ENCODE measurements at regions of chr1 and their contacts with region 1.

Region 1: DNA sequence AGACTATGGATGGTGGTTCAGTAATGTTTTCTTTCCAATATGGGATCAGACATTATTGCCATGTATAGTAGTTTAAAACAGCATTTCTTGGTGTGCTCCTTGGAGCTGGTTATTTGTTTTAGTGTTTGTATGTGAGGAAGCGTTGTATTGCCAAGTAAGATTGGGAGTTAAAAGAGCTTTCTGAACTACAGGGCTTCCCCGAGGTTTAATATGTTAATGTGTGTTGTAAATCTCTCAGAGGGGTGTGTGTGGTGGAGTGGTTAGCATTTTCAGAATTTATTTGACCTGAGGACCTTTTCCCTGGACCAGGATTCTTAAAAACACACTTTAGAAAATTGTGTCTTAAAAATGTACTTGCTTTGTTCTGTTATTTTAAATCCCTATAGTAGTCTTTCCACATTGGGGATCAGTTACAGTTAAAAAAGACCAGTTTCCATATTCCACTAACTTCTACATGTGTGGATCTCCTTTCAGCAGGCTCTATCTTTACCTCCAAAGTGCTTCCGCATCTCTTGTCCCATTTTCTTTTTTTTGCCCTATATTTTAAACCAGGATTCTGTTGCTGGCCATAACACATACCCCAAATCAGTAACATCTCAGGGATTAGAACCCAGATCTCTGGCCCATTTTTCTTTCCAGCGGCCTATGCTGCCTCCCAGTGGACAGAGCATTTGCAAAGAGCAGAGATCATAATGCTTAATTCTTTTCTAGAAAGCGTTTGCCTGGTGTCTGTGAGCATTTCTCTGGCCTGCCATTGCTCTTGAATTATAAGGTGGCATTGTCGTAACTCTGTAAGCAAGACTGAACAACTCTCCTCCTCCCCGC is 58.6 kb downstream of the PBX1 start:
- DNase-seq: no peak
- H3K4me3 ChIP-seq: no peak overlapping the region
- H3K27ac ChIP-seq: peak overlapping the region; percentile 10 to 71 (median 60)
- H3K4me1 ChIP-seq: peaks cover 56 to 99% (median 98%) of the 10 kb centered on the region in 4 donors
- H3K27me3 ChIP-seq: no peaks in the 10 kb centered on the region
- CTCF ChIP-seq: peak; percentile 56 to 65 (median 62)
- EP300 ChIP-seq: no peak
- POLR2A ChIP-seq: no peak

Region 2: DNA sequence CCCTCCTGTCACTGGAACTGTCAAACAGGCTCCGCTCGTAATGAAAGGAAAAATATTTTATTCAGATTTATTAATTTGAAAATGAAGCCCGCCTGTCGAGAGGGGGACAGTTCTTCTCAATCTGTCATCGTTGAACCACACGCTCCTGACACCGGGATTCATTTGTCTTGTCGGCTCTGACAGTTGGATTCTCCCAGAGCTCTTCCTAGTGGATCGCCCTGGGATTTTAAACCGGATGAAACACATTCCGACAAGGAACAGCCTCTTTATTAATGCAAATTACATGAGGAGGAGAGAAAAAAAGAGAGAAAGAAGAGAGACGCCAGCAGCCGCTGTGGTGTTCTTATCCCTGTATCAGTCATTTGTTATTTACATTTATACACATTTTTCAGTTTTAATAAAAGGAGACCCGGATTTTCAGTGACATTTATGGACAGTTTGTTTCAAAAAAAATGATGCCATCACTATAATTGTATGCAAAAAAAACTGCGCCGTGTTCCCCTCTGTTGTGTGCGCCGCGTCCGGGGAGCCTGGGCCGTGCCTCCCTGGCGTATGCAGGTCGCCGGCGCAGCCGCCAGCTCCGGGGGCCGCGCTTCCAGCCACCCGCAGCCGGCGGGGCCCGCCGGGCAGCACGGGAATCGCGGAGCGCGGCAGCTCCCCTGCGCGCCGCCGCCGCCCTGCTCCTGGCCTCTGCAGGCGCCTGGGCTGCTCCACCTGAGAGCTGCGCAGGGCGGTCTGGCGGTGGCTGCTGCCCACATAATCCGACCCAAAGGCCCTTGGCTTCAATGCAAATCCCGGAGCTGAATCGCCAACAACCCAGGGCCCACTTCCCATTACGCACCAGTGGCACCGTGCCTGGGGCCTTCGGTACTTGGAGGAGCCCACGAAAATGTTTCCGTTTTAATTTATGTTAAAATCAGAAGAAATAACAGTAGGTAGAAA is 296.5 kb before region 1 on chr1:
- intact Hi-C with region 1: loop called (anchors 10 kb)
- DNase-seq: no peak
- H3K4me3 ChIP-seq: peak overlapping the region; percentile 46 to 64 (median 58)
- H3K27ac ChIP-seq: peak overlapping the region; percentile 68 to 78 (median 74)
- H3K4me1 ChIP-seq: peaks cover 0 to 21% (median 13%) of the 10 kb centered on the region in 4 donors
- H3K27me3 ChIP-seq: no peaks in the 10 kb centered on the region
- CTCF ChIP-seq: no peak
- EP300 ChIP-seq: no peak
- POLR2A ChIP-seq: no peak

Region 3: DNA sequence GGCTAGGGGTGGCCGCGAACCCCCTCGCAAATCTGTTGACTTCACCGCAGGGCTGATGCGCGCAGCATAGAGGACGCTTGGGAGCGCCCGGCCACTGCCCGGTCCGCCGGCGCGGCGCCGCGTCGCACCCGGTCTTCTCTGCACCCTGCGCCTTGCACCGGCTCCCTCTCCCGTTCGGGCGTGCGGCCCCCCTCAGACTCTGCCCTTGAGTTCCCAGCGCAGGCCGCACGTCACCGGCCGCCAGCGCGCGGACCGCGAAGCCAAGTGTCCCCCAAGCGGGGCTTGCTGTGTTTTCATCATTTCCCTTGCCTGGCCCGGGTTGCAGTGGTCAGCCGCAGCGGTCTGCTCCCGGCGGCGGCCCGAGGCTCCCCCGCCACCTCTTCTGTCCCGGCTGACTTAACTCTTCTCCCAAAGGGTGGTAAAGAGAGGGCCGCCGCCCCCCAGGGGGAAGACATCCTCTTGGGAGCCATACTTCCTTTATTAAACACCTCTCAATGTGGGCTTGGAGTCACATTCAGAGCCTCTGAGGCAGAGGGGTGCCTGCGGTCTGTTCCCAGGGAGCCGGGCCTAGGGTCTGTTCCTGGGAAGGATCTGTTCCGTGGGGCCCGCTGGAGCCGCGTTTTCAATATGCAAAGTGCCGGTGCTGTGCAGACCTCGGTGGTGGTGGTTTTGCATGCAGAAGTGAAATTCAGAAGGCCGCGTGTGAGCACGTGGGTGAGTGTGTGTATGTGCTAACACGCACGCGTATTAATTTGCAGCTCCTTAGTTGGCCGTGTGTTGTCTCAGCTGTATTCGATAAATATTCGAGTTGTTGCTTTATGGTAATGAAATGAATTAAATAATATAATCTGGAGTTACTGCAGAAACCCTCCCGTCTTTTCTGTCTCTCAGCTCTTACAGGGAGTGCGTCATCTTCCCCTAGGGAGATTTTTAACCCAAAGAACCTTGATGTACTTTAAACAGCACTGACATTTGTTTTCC is 41.0 kb before region 1 on chr1:
- intact Hi-C with region 1: no loop called
- DNase-seq: no peak
- H3K4me3 ChIP-seq: peak overlapping the region; percentile 48 to 55 (median 50)
- H3K27ac ChIP-seq: peak overlapping the region; percentile 81 to 90 (median 88)
- H3K4me1 ChIP-seq: peaks cover 42 to 98% (median 94%) of the 10 kb centered on the region in 4 donors
- H3K27me3 ChIP-seq: no peaks in the 10 kb centered on the region
- CTCF ChIP-seq: no peak
- EP300 ChIP-seq: no peak
- POLR2A ChIP-seq: no peak

Region 4: DNA sequence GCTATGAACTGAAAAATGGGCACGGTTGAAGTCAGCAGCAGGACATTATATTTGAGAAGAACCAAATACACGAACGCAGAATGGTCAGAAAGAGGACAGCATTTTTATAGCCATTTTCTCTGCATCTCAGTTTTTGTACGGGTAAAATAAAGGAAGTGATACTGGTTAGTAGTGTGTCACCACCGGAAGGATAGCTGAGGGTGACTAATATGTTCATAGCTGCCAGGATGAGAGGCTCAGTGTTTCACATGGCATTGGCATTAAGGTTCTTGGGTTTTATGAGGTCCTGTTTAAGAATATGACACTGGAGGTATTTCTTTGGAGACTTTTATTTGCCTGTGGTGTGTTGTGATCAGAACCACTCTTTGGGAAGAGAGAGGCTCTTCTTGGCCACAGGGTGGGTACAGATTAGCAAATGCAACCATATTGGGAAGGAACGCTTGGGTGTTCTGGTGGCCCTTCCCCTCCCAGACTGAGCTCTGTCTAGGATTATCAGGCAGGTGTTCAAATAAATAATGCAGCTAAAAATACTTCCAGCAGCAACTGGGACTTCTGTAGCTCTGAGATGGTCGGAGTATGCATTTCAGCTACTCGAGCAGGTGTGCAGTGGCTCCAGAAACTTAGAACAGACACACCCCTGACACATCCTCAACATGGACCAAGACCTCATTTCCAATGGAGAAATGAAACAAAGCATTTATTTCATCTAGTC is 99.6 kb after region 1 on chr1:
- intact Hi-C with region 1: no loop called
- DNase-seq: no peak
- H3K4me3 ChIP-seq: no peak overlapping the region
- H3K27ac ChIP-seq: peak overlapping the region in 3 of 4 donors; percentile 26 to 45 (median 28)
- H3K4me1 ChIP-seq: peaks cover 37 to 100% (median 94%) of the 10 kb centered on the region in 4 donors
- H3K27me3 ChIP-seq: no peaks in the 10 kb centered on the region
- CTCF ChIP-seq: no peak
- EP300 ChIP-seq: no peak
- POLR2A ChIP-seq: no peak

Region 5: DNA sequence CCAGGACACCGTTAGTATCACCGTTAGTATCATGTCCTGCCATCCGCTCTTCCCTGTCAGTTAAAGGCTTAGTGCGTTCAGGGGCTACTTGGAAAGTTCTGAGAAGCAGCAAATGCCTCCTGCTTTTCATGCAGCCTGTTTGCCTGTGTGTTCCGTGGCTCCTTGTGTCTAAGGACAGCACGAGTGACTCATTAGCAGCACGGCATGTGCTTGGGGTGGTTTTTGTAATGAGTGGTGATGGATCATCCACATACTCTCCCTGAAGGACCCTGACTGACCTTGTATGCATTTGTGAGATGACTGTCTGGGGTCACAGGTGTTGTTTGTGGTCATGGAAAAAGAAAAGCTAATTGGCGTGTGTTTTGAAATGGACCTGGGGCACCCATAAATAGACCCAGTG is 163.3 kb after region 1 on chr1:
- intact Hi-C with region 1: loop called (anchors 5 kb)
- DNase-seq: no peak
- H3K4me3 ChIP-seq: peak overlapping the region in 1 of 4 donors; percentile 15
- H3K27ac ChIP-seq: peak overlapping the region; percentile 78 to 81 (median 80)
- H3K4me1 ChIP-seq: peaks cover 48 to 96% (median 93%) of the 10 kb centered on the region in 4 donors
- H3K27me3 ChIP-seq: no peaks in the 10 kb centered on the region
- CTCF ChIP-seq: no peak
- EP300 ChIP-seq: peak; percentile 89
- POLR2A ChIP-seq: no peak